ENCODE measurements at regions of chr6 and their contacts with region 1.

Region 1: DNA sequence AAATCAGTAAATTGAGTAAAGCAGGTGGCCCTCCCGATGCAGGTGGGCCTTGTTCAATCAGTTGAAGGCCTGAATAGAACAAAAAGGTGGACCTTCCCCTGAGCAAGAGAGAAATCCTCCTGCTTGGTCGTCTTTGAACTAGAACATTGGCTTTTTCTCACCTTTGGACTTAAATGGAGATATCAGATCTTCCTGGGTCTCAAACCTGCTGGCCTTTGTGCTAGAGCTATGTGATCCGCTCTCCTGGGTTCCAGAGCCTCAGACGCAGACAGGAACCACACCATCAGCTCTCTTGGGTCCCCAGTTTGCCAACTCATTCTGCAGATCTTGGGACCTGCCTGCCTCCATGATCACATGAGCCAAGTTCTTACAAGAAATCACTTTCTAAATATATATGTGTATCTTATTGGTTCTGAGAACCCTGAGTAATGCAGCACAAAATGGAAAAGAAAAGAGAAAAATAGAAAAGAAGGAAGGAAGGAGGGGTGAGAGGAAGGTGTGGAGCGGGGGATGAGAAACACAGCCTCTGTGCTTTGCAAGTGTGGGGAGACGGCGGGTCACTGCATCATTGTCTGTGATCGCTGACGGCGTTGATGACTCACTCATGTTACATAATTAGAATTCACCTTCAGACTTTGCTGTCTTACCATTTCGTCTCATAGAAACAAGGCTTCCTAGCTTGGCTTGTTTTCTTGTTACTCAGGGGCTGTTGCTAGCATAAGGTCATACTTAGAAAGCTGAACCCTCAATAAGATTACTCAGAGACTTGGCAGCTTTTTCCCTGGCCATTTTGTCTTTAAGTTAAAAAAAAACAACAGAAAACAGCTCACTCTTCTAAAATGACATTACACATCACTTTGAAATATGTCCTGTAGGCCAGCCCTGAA is 85.7 kb upstream of the NEDD9 start:
- DNase-seq: peak; percentile 73
- H3K4me3 Mint-ChIP-seq: no peak overlapping the region
- H3K27ac Mint-ChIP-seq: peak overlapping the region; percentile 98
- H3K4me1 Mint-ChIP-seq: peaks cover 53% of the 10 kb centered on the region
- H3K27me3 Mint-ChIP-seq: no peaks in the 10 kb centered on the region
- CTCF ChIP-seq: no peak

Region 2: DNA sequence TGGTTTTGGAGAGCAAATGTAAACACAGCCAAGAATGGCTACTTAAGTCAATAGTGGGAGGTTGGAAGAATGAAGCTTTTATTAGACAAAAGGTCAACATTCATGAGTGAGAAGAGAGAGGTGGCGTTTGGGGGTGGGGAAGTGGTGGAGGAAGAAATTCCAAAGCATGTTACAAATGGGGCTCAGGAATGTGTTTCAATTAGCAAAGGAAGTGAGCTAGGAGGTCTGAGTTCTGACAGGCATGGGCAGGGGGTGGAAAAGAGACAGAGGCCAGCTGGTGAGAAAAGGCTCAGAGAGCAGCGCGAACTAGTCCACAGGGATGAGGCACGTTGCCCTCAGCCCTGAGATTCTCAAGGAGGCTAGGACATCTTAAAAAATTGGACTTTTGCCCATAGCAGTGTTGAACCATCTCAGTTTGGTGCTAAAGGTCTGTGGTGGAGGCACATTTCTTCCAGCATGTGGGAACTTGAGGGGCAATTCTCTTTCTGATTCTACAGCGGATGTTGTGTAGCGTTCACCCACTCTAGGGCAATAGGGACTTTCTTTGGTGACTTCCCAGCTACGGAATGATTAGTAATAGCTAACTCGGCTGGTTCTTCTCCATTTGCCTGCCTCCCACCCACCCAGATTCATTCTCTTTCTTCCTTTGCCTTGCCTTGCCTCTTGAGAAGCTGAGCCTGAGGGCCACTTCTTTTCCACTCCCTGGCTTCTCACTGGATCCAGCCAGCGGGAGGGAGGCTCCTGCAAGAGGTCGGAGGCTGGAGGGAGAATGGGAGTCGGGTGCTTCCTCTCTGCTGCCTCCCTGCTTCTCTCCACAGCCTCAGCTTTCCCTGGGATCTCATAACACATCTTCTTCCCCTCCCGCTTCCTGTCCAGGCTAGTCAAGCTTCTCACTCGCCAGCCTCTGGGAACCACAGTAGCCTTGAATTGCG is 40.6 kb before region 1 on chr6:
- CTCF ChIA-PET with region 1: interaction called, 3 read pairs
- intact Hi-C with region 1: loop called (anchors 5 kb)
- DNase-seq: peak; percentile 41
- H3K4me3 Mint-ChIP-seq: no peak overlapping the region
- H3K27ac Mint-ChIP-seq: peak overlapping the region; percentile 52
- H3K4me1 Mint-ChIP-seq: peaks cover 55% of the 10 kb centered on the region
- H3K27me3 Mint-ChIP-seq: no peaks in the 10 kb centered on the region
- CTCF ChIP-seq: no peak

Region 3: GRCh38 chr6:11770546-11771466 is 452.7 kb after region 1 on chr6:
- CTCF ChIA-PET with region 1: no interaction called
- intact Hi-C with region 1: no loop called
- DNase-seq: peak; percentile 61
- H3K4me3 Mint-ChIP-seq: peak overlapping the region; percentile 45
- H3K27ac Mint-ChIP-seq: peak overlapping the region; percentile 80
- H3K4me1 Mint-ChIP-seq: peaks cover 67% of the 10 kb centered on the region
- H3K27me3 Mint-ChIP-seq: no peaks in the 10 kb centered on the region
- CTCF ChIP-seq: no peak